CD8-positive, alpha-beta memory T cell (primary cell): ENCODE measurements at regions of chr7 and their contacts with region 1.

Region 1: GRCh38 chr7:156949541-156950380 is at the start of gene NOM1:
- DNase-seq: peak; percentile 86 to 92 (median 87)
- H3K4me3 ChIP-seq: peak within 1 kb of the TSS; percentile 72
- H3K4me3 Mint-ChIP-seq: peak within 1 kb of the TSS; percentile 87 to 98 (median 93)
- H3K27ac ChIP-seq: peak within 1 kb of the TSS; percentile 69
- H3K27ac Mint-ChIP-seq: peak within 1 kb of the TSS in 7 of 8 donors; percentile 66 to 96 (median 86)
- H3K4me1 ChIP-seq: peaks cover 21% of the 10 kb centered on the region
- H3K4me1 Mint-ChIP-seq: peaks cover 23 to 36% (median 26%) of the 10 kb centered on the region in 3 donors
- H3K27me3 ChIP-seq: no peaks in the 10 kb centered on the region
- H3K27me3 Mint-ChIP-seq: peaks cover 10 to 20% of the 10 kb centered on the region in 2 donors
- total RNA-seq, gene NOM1: 34.2 to 34.3 TPM

Region 2: DNA sequence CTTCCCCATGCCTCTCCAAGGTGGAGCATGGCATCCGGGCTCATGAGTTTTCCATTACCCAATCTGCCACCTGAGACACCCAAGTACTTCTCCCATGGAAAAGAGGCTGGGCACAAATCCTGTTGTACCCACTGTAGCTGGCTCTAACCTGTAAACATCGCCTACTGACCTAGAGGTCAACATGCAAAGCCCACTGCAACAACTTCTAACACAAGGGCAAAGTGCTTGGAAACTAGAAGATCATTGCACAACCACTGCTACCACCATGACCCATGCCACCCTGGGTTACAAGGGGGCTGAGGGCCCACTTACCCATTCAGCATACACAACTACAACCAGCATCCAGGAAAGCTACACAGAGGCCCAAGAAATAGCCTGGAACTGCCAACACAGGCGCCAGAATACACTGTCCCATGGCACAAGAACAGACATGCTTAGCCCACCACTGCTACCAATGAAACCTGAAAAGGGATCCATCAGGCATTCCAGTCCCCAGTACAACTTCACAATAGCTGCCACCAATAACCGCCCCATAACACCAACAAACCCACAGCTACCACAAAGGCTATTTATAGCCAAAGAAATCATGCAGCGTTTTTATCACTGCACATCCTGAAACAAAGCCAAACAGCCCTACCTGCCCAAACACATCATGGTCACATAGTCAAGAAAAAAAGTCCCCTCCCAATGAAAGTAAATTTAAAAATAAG is 245.8 kb before region 1 on chr7:
- CTCF ChIA-PET with region 1: no interaction called
- POLR2A ChIA-PET with region 1: no interaction called
- DNase-seq: no peak
- H3K4me3 ChIP-seq: no peak overlapping the region
- H3K4me3 Mint-ChIP-seq: peak overlapping the region in 2 of 7 donors; percentile 28 to 52
- H3K27ac ChIP-seq: no peak overlapping the region
- H3K27ac Mint-ChIP-seq: peak overlapping the region in 1 of 8 donors; percentile 66
- H3K4me1 ChIP-seq: no peaks in the 10 kb centered on the region
- H3K4me1 Mint-ChIP-seq: peaks cover 12 to 26% (median 17%) of the 10 kb centered on the region in 3 donors
- H3K27me3 ChIP-seq: no peaks in the 10 kb centered on the region
- H3K27me3 Mint-ChIP-seq: no peaks in the 10 kb centered on the region

Region 3: GRCh38 chr7:156892821-156893706 is 56.7 kb before region 1 on chr7 and contains the start of gene LMBR1:
- CTCF ChIA-PET with region 1: interaction called, 4 read pairs
- POLR2A ChIA-PET with region 1: interaction called, 11 read pairs
- DNase-seq: peak; percentile 92 to 96 (median 94)
- H3K4me3 ChIP-seq: peak within 1 kb of the TSS; percentile 76
- H3K4me3 Mint-ChIP-seq: peak within 1 kb of the TSS; percentile 87 to 96 (median 93)
- H3K27ac ChIP-seq: peak within 1 kb of the TSS; percentile 85
- H3K27ac Mint-ChIP-seq: peak within 1 kb of the TSS; percentile 89 to 98 (median 94)
- H3K4me1 ChIP-seq: peaks cover 10% of the 10 kb centered on the region
- H3K4me1 Mint-ChIP-seq: peaks cover 30 to 58% (median 47%) of the 10 kb centered on the region in 3 donors
- H3K27me3 ChIP-seq: no peaks in the 10 kb centered on the region
- H3K27me3 Mint-ChIP-seq: no peaks in the 10 kb centered on the region
- total RNA-seq, gene LMBR1: 49.2 to 51.9 TPM

Region 4: DNA sequence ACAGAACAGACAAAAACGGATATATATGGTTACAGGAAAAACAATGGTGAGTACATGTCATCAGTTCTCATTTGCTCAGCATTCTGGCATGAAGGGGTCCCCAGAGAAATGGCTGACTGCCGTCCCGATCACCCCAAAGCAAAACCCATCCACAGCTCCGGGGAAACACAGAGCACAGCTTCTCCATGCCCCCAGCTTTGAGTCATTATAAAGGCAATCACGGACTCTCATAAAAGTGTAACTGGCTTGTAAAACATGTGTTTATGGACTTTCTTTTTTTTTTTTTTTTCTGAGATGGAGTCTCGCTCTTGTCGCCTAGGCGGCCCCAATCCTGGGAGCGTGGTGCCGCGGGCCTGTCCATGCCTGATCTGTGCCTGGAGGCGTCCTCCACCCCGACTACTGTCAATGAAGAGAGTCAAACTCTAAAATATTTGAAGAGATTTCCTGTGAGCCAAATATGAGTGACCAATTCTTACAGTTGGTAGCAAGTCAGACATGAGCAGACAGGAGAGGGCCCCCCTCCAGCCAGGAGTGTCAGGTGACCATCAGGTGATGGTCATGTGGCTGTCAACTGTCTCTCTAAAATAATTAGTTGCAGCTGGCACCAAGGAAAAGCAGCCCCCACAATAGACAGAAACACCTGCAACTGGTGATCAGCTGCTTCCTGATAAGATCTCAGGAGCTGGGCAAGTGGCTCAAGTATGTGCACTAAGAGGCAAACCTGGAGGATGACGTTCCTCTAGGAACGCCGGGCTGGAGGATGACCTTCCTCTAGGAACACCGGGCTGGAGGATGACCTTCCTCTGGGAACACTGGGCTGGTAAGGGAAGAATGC is 22.0 kb before region 1 on chr7:
- CTCF ChIA-PET with region 1: interaction called, 11 read pairs
- POLR2A ChIA-PET with region 1: no interaction called
- DNase-seq: no peak
- H3K4me3 ChIP-seq: no peak overlapping the region
- H3K4me3 Mint-ChIP-seq: no peak overlapping the region
- H3K27ac ChIP-seq: no peak overlapping the region
- H3K27ac Mint-ChIP-seq: peak overlapping the region in 4 of 8 donors; percentile 27 to 66 (median 44)
- H3K4me1 ChIP-seq: peaks cover 5% of the 10 kb centered on the region
- H3K4me1 Mint-ChIP-seq: peaks cover 18 to 43% (median 34%) of the 10 kb centered on the region in 3 donors
- H3K27me3 ChIP-seq: no peaks in the 10 kb centered on the region
- H3K27me3 Mint-ChIP-seq: peaks cover 0 to 8% of the 10 kb centered on the region in 2 donors

Region 5: DNA sequence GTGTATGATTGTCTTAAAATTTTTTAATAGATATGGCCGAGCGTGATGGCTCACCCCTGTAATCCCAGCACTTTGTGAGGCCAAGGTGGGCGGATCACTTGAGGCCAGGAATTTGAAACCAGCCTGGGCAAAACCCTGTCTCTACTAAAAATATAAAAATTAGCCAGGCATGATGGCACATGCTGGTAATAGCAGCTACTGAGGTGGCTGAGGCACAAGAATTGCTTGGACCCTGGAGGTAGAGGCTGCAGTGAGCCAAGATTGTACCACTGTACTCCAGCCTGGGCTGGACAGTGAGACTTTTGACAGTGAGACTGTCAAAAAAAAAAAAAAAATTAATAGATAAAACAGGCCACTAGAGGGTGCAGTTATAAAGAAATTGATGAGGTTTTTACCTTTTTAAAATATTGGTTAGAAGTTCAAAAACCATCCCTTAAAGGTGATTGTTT is 20.2 kb after region 1 on chr7:
- CTCF ChIA-PET with region 1: interaction called, 12 read pairs
- POLR2A ChIA-PET with region 1: no interaction called
- DNase-seq: peak in 1 of 5 donors; percentile 16
- H3K4me3 ChIP-seq: no peak overlapping the region
- H3K4me3 Mint-ChIP-seq: no peak overlapping the region
- H3K27ac ChIP-seq: no peak overlapping the region
- H3K27ac Mint-ChIP-seq: no peak overlapping the region
- H3K4me1 ChIP-seq: no peaks in the 10 kb centered on the region
- H3K4me1 Mint-ChIP-seq: no peaks in the 10 kb centered on the region
- H3K27me3 ChIP-seq: no peaks in the 10 kb centered on the region
- H3K27me3 Mint-ChIP-seq: no peaks in the 10 kb centered on the region

Region 6: DNA sequence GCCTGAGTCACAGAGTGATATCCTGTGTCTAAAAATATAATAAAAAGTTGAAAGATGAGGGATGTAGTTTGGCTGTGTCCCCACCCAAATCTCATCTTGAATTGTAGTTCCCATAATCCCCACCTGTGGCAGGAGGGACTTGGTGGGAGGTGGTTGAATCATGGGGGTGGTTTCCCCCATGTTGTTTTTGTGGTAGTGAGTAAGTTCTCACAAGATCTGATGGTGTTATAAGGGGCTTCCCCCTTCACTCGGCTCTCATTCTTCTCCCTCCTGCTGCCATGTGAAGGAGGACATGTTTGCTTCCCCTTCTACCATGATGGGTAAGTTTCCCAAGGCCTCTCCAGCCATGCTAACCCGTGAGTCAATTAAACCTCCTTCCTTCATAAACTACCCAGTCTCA is 163.8 kb after region 1 on chr7:
- CTCF ChIA-PET with region 1: no interaction called
- POLR2A ChIA-PET with region 1: no interaction called
- DNase-seq: no peak
- H3K4me3 ChIP-seq: no peak overlapping the region
- H3K4me3 Mint-ChIP-seq: no peak overlapping the region
- H3K27ac ChIP-seq: no peak overlapping the region
- H3K27ac Mint-ChIP-seq: no peak overlapping the region
- H3K4me1 ChIP-seq: no peaks in the 10 kb centered on the region
- H3K4me1 Mint-ChIP-seq: no peaks in the 10 kb centered on the region
- H3K27me3 ChIP-seq: no peaks in the 10 kb centered on the region
- H3K27me3 Mint-ChIP-seq: peaks cover 13 to 45% of the 10 kb centered on the region in 2 donors

Region 7: GRCh38 chr7:157238087-157238486 is 288.3 kb after region 1 on chr7:
- CTCF ChIA-PET with region 1: no interaction called
- POLR2A ChIA-PET with region 1: no interaction called
- DNase-seq: no peak
- H3K4me3 ChIP-seq: no peak overlapping the region
- H3K4me3 Mint-ChIP-seq: no peak overlapping the region
- H3K27ac ChIP-seq: no peak overlapping the region
- H3K27ac Mint-ChIP-seq: peak overlapping the region in 3 of 8 donors; percentile 43 to 52 (median 52)
- H3K4me1 ChIP-seq: no peaks in the 10 kb centered on the region
- H3K4me1 Mint-ChIP-seq: peaks cover 0 to 7% (median 3%) of the 10 kb centered on the region in 3 donors
- H3K27me3 ChIP-seq: no peaks in the 10 kb centered on the region
- H3K27me3 Mint-ChIP-seq: peaks cover 0 to 5% of the 10 kb centered on the region in 2 donors